ENCODE measurements at regions of chr18 and their contacts with region 1.

Region 1: GRCh38 chr18:47748847-47749599 is 181.4 kb downstream of the SMAD2 start:
- DNase-seq: peak; percentile 51
- H3K4me3 ChIP-seq: no peak overlapping the region
- H3K27ac ChIP-seq: no peak overlapping the region
- H3K4me1 ChIP-seq: no peaks in the 10 kb centered on the region
- H3K27me3 ChIP-seq: no peaks in the 10 kb centered on the region
- CTCF ChIP-seq: peak; percentile 100
- POLR2A ChIP-seq: no peak

Region 2: DNA sequence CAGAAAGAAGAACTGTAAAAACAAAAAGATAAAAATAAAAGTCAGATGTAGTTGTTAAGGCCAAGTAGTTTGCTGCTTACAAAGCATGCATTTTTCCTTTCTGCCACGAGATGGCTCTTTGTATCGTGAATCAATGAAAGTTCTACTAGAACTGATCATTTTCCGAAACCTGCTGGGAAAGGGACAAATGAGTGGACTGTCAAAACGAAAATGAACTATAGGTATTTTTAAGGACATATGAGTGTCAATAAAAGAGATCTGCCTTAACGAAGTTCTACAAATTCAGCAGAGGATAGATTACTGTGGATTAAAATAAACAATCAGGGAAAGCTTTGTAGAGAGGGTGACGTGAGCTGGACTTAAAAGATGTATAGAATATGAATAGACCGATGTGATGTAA is 698.6 kb before region 1 on chr18:
- intact Hi-C with region 1: loop called (anchors 5 kb)
- DNase-seq: no peak
- H3K4me3 ChIP-seq: no peak overlapping the region
- H3K27ac ChIP-seq: no peak overlapping the region
- H3K4me1 ChIP-seq: no peaks in the 10 kb centered on the region
- H3K27me3 ChIP-seq: no peaks in the 10 kb centered on the region
- CTCF ChIP-seq: peak in 3 of 4 experiments; percentile 28 to 50 (median 41)
- POLR2A ChIP-seq: no peak

Region 3: DNA sequence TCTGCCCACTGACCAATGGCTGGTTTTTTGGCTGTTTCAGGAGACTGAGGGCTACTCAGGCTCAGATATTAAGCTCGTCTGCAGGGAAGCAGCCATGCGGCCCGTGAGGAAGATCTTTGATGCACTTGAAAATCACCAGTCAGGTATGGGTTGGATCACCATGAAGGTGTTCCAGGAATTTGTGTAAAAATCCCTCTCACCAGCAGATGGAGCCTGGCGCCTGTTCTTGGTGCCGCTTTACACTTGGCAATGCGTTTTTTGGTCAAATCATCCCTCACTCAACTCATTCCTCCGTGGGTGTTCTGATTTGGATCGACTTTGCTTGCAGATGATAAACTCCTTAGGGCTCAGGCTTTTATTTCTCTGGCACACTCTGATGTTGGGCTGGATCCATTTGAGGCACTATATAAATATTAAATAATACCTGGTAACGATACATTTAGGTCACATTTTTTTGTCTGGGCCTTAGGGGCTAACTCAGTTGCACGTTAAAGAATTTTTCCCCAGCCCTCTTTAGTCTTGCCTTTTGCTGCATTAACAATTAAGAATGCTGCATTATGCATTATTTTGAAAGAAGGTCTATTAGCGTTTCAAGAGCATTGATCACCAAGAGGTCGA is 648.7 kb before region 1 on chr18:
- intact Hi-C with region 1: loop called (anchors 2 kb)
- DNase-seq: peak; percentile 39
- H3K4me3 ChIP-seq: no peak overlapping the region
- H3K27ac ChIP-seq: no peak overlapping the region
- H3K4me1 ChIP-seq: no peaks in the 10 kb centered on the region
- H3K27me3 ChIP-seq: no peaks in the 10 kb centered on the region
- CTCF ChIP-seq: peak in 3 of 4 experiments; percentile 55 to 70 (median 58)
- POLR2A ChIP-seq: no peak

Region 4: GRCh38 chr18:47215554-47216138 is 533.4 kb before region 1 on chr18:
- intact Hi-C with region 1: loop called (anchors 2 kb)
- DNase-seq: peak; percentile 14
- H3K4me3 ChIP-seq: no peak overlapping the region
- H3K27ac ChIP-seq: no peak overlapping the region
- H3K4me1 ChIP-seq: no peaks in the 10 kb centered on the region
- H3K27me3 ChIP-seq: peaks cover 4% of the 10 kb centered on the region
- CTCF ChIP-seq: peak; percentile 13 to 71 (median 45)
- POLR2A ChIP-seq: no peak

Region 5: DNA sequence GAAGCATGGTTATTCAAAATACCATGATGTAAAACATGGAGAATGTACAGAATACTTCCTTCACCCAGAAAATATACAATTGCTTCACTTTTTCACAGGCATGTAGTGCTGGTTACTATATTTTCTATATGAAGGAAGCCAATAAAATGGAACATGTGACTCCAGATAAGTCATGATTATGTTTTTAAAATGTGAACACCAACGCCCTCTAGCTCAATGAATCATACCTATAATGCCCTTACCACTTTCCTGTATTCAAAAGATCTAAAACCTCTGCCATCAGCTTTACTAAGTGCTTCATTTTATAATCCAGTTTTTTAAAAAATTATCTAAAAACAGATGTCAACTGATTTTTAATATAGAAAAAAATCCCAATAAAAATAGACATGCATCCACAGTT is 121.6 kb after region 1 on chr18:
- intact Hi-C with region 1: no loop called
- DNase-seq: no peak
- H3K4me3 ChIP-seq: no peak overlapping the region
- H3K27ac ChIP-seq: no peak overlapping the region
- H3K4me1 ChIP-seq: no peaks in the 10 kb centered on the region
- H3K27me3 ChIP-seq: no peaks in the 10 kb centered on the region
- CTCF ChIP-seq: no peak
- POLR2A ChIP-seq: no peak

Region 6: GRCh38 chr18:47979611-47980200 is 230.7 kb after region 1 on chr18:
- intact Hi-C with region 1: no loop called
- DNase-seq: peak; percentile 12
- H3K4me3 ChIP-seq: no peak overlapping the region
- H3K27ac ChIP-seq: no peak overlapping the region
- H3K4me1 ChIP-seq: no peaks in the 10 kb centered on the region
- H3K27me3 ChIP-seq: no peaks in the 10 kb centered on the region
- CTCF ChIP-seq: no peak
- POLR2A ChIP-seq: no peak

Measured in prostate gland (tissue), 2 donors.